ENCODE measurements at regions of chr1 and their contacts with region 1.

Region 1: GRCh38 chr1:84936116-84936810 is 43.3 kb upstream of the LPAR3 start:
- DNase-seq: peak; percentile 57
- H3K4me3 ChIP-seq: no peak overlapping the region
- H3K27ac ChIP-seq: no peak overlapping the region
- H3K4me1 ChIP-seq: peaks cover 5% of the 10 kb centered on the region
- H3K27me3 ChIP-seq: peaks cover 17 to 36% of the 10 kb centered on the region in 2 experiments
- CTCF ChIP-seq: peak; percentile 71 to 77
- POLR2A ChIP-seq: no peak

Region 2: GRCh38 chr1:83931658-83932253 is 1004.5 kb before region 1 on chr1:
- CTCF ChIA-PET with region 1: interaction called, 3 read pairs
- POLR2A ChIA-PET with region 1: no interaction called
- dilution Hi-C with region 1: no loop called
- intact Hi-C with region 1: loop called (anchors 10 kb)
- DNase-seq: peak; percentile 48
- H3K4me3 ChIP-seq: no peak overlapping the region
- H3K27ac ChIP-seq: no peak overlapping the region
- H3K4me1 ChIP-seq: no peaks in the 10 kb centered on the region
- H3K27me3 ChIP-seq: no peaks in the 10 kb centered on the region
- CTCF ChIP-seq: peak; percentile 33 to 42
- POLR2A ChIP-seq: no peak

Region 3: DNA sequence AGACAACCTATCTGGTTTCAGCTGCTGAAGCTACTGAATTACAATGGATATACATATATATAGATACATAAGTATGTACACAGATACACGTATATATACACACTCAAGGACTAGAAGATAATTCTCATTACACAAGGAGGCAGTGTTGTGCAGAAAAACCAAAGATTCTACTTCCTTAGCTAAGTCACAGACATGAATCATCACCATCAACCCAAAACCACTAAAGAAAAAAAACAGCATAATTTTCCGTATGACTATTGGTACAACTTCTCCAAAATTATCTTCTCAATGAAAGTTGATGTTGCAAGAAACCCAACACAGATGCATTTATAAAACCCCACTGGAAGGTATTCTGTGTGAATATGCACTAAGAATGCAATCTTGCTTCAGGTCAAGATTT is 494.0 kb before region 1 on chr1:
- CTCF ChIA-PET with region 1: interaction called, 20 read pairs
- POLR2A ChIA-PET with region 1: no interaction called
- dilution Hi-C with region 1: no loop called
- intact Hi-C with region 1: loop called (anchors 1 kb)
- DNase-seq: peak; percentile 89
- H3K4me3 ChIP-seq: no peak overlapping the region
- H3K27ac ChIP-seq: no peak overlapping the region
- H3K4me1 ChIP-seq: peaks cover 2% of the 10 kb centered on the region
- H3K27me3 ChIP-seq: no peaks in the 10 kb centered on the region
- CTCF ChIP-seq: peak; percentile 18 to 26
- POLR2A ChIP-seq: no peak

Region 4: DNA sequence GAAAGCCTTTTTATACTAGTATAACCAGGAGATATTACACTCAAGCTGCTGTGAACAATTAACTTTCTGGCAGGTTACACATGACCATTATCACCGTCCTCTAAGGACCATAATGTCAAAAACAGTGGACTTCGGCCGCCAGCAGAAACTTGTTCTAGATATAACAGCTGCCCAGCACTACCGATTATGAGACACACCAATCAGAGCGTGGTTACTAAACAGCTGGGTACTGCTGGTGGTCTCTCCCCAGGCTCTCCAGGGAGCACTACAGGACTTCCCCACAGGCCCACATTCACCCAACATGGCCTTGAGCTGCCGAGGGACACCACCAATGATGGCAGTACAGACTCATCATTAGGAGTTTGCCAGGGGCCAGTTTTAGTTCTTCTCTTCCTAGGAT is 304.1 kb before region 1 on chr1:
- CTCF ChIA-PET with region 1: no interaction called
- POLR2A ChIA-PET with region 1: no interaction called
- dilution Hi-C with region 1: no loop called
- intact Hi-C with region 1: no loop called
- DNase-seq: no peak
- H3K4me3 ChIP-seq: no peak overlapping the region
- H3K27ac ChIP-seq: no peak overlapping the region
- H3K4me1 ChIP-seq: peaks cover 12% of the 10 kb centered on the region
- H3K27me3 ChIP-seq: no peaks in the 10 kb centered on the region
- CTCF ChIP-seq: no peak
- POLR2A ChIP-seq: no peak

Region 5: GRCh38 chr1:84753516-84754385 is 182.5 kb before region 1 on chr1:
- CTCF ChIA-PET with region 1: interaction called, 22 read pairs
- POLR2A ChIA-PET with region 1: no interaction called
- dilution Hi-C with region 1: no loop called
- intact Hi-C with region 1: loop called (anchors 1 kb)
- DNase-seq: peak; percentile 71
- H3K4me3 ChIP-seq: no peak overlapping the region
- H3K27ac ChIP-seq: no peak overlapping the region
- H3K4me1 ChIP-seq: no peaks in the 10 kb centered on the region
- H3K27me3 ChIP-seq: peaks cover 8 to 12% of the 10 kb centered on the region in 2 experiments
- CTCF ChIP-seq: peak; percentile 90 to 93
- POLR2A ChIP-seq: no peak

Region 6: GRCh38 chr1:84772428-84772943 is 163.8 kb before region 1 on chr1:
- CTCF ChIA-PET with region 1: interaction called, 24 read pairs
- POLR2A ChIA-PET with region 1: no interaction called
- dilution Hi-C with region 1: no loop called
- intact Hi-C with region 1: loop called (anchors 1 kb)
- DNase-seq: peak; percentile 74
- H3K4me3 ChIP-seq: no peak overlapping the region
- H3K27ac ChIP-seq: no peak overlapping the region
- H3K4me1 ChIP-seq: no peaks in the 10 kb centered on the region
- H3K27me3 ChIP-seq: peaks cover 2 to 12% of the 10 kb centered on the region in 2 experiments
- CTCF ChIP-seq: peak; percentile 83 to 87
- POLR2A ChIP-seq: no peak

Region 7: GRCh38 chr1:84853741-84854721 is 82.2 kb before region 1 on chr1:
- CTCF ChIA-PET with region 1: no interaction called
- POLR2A ChIA-PET with region 1: no interaction called
- dilution Hi-C with region 1: no loop called
- intact Hi-C with region 1: loop called (anchors 5 kb)
- DNase-seq: peak; percentile 87
- H3K4me3 ChIP-seq: no peak overlapping the region
- H3K27ac ChIP-seq: peak overlapping the region; percentile 90
- H3K4me1 ChIP-seq: peaks cover 20% of the 10 kb centered on the region
- H3K27me3 ChIP-seq: no peaks in the 10 kb centered on the region
- CTCF ChIP-seq: no peak
- POLR2A ChIP-seq: no peak

Region 8: GRCh38 chr1:84923317-84923716 is 12.9 kb before region 1 on chr1:
- CTCF ChIA-PET with region 1: interaction called, 14 read pairs
- POLR2A ChIA-PET with region 1: no interaction called
- dilution Hi-C with region 1: no loop called
- intact Hi-C with region 1: no loop called
- DNase-seq: no peak
- H3K4me3 ChIP-seq: no peak overlapping the region
- H3K27ac ChIP-seq: no peak overlapping the region
- H3K4me1 ChIP-seq: no peaks in the 10 kb centered on the region
- H3K27me3 ChIP-seq: peaks cover 2 to 20% of the 10 kb centered on the region in 2 experiments
- CTCF ChIP-seq: no peak
- POLR2A ChIP-seq: no peak

Measured in endothelial cell of umbilical vein (primary cell).